Heart left ventricle (tissue), 16 donors: ENCODE measurements at regions of chr2 and their contacts with region 1.

Region 1: DNA sequence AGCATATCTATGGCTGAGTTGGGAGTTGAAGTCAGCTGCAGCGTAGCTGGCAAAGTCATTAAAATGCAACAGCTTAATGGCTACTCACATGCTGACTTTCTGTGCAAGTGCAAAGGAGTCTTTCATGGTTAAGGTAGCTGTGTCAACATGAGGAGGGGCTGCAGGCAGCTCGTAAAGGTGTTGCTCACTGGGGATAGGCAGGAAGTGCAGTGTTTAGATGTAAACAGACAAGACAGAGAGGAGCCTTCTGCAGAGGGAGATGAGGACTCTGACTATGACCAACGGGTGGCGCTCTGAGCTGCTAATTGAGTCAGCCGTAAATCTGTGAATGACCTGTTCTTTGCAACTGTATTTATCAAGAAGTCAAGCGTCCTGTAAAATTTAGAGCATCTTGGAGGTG is 22.3 kb upstream of the CAVIN2 start:
- DNase-seq: no peak
- ATAC-seq: no peak
- H3K4me3 ChIP-seq: no peak overlapping the region
- H3K27ac ChIP-seq: peak overlapping the region in 2 of 12 donors; percentile 38 to 69
- H3K4me1 ChIP-seq: peaks cover 12 to 51% (median 37%) of the 10 kb centered on the region in 12 donors
- H3K27me3 ChIP-seq: no peaks in the 10 kb centered on the region
- CTCF ChIP-seq: peak in 1 of 12 donors; percentile 23
- POLR2A ChIP-seq: no peak

Region 2: GRCh38 chr2:191910518-191910917 is 41.3 kb after region 1 on chr2:
- intact Hi-C with region 1: no loop called
- DNase-seq: no peak
- ATAC-seq: no peak
- H3K4me3 ChIP-seq: no peak overlapping the region
- H3K27ac ChIP-seq: no peak overlapping the region
- H3K4me1 ChIP-seq: peaks cover 0 to 12% (median 7%) of the 10 kb centered on the region in 12 donors
- H3K27me3 ChIP-seq: no peaks in the 10 kb centered on the region
- CTCF ChIP-seq: no peak
- POLR2A ChIP-seq: no peak

Region 3: GRCh38 chr2:191976436-191976835 is 107.3 kb after region 1 on chr2:
- intact Hi-C with region 1: no loop called
- DNase-seq: no peak
- ATAC-seq: no peak
- H3K4me3 ChIP-seq: no peak overlapping the region
- H3K27ac ChIP-seq: no peak overlapping the region
- H3K4me1 ChIP-seq: no peaks in the 10 kb centered on the region
- H3K27me3 ChIP-seq: no peaks in the 10 kb centered on the region
- CTCF ChIP-seq: no peak
- POLR2A ChIP-seq: no peak

Region 4: GRCh38 chr2:192162392-192163042 is 293.3 kb after region 1 on chr2:
- intact Hi-C with region 1: loop called in 1 of 10 experiments (anchors 2 kb)
- DNase-seq: peak in 3 of 5 donors; percentile 57 to 63 (median 63)
- ATAC-seq: peak; percentile 64 to 89 (median 80)
- H3K4me3 ChIP-seq: peak overlapping the region in 7 of 12 donors; percentile 8 to 36 (median 22)
- H3K27ac ChIP-seq: peak overlapping the region in 1 of 12 donors; percentile 21
- H3K4me1 ChIP-seq: peaks cover 0 to 10% (median 0%) of the 10 kb centered on the region in 12 donors
- H3K27me3 ChIP-seq: peaks cover 0 to 4% (median 0%) of the 10 kb centered on the region in 9 donors
- CTCF ChIP-seq: peak; percentile 81 to 97 (median 94)
- POLR2A ChIP-seq: no peak